PC-9 (cell line): ENCODE measurements at regions of chr10 and their contacts with region 1.

Region 1: DNA sequence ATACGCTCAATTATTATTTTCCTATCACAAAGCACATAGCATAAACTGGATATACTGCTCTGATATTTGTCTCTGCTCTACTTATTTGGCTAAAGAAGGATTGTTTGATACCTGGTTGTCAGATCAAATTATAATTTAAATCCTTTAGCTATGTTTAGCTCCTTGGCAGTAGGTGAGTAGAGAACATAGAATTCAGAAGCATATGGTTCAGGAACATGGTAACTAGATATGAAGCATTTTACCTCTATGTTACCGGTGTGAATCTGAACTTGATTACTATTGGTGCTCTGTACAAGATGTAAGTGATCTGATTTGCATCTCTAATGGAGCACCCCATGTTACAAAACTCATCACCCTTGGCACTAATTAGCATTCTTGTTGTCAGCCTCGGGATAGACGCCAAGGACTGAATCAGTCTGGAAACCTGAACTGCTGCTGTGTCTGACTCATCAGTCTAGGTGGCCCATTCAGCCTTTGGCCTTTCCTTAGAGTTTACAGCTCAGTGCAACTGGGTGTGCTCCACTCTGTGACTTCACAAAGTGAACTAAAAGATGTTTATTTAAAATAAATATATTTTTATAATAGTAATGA is 12.3 kb upstream of the MYPN start:
- DNase-seq: peak; percentile 80 to 95
- H3K4me3 ChIP-seq: peak overlapping the region; percentile 2; the same call in 1 of the 2 replicates
- H3K27ac ChIP-seq: peak overlapping the region; percentile 100
- H3K4me1 ChIP-seq: peaks cover 73% of the 10 kb centered on the region
- H3K27me3 ChIP-seq: no peaks in the 10 kb centered on the region
- CTCF ChIP-seq: no peak

Region 2: GRCh38 chr10:68052463-68052862 is 44.5 kb before region 1 on chr10:
- CTCF ChIA-PET with region 1: interaction called, 10 read pairs
- POLR2A ChIA-PET with region 1: no interaction called
- intact Hi-C with region 1: no loop called
- DNase-seq: peak in 1 of 2 experiments; percentile 76
- H3K4me3 ChIP-seq: no peak overlapping the region
- H3K27ac ChIP-seq: peak overlapping the region; percentile 38
- H3K4me1 ChIP-seq: peaks cover 25% of the 10 kb centered on the region
- H3K27me3 ChIP-seq: no peaks in the 10 kb centered on the region
- CTCF ChIP-seq: no peak

Region 3: DNA sequence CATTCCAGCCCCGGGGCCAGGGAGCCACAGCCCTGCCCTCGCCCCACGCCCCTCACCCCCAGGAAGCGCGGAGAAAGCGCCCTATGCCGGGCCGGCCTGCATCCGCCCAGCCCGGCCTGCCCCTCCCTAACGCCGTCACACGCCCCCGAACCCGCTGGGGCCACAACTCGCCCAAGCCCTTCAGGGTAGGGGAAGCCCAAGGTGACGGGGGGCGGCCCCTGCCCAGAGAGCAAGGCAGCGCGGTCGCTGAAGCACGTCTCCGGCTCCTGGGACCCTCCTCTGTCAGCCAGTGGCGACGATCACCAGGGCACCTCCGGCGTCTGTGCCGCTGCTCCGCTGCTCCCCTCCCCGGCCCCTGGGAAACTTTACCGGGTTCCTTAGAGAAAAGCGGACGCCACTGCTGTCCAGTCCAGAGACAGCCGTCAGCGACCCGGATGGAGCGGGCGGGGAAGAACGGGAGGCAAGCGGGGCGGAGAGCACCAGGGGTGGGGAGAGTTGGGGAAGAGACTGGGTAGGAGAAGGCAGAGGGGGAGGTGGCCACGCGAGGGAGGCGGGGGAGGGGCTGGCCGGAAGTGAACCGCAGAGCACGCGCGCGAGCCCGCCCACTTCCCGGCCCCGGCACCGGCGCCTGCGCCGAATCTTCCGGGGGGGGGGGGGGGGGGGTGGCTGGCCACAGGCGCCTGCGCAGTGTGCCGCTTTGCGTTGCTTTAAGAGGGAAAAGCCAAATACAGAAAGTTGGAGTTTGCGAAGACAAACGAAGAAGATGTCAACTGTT is 22.0 kb before region 1 on chr10 and contains the start of gene HERC4:
- CTCF ChIA-PET with region 1: no interaction called
- POLR2A ChIA-PET with region 1: no interaction called
- intact Hi-C with region 1: loop called (anchors 1 kb)
- DNase-seq: peak; percentile 82 to 92
- H3K4me3 ChIP-seq: peak within 1 kb of the TSS; percentile 97
- H3K27ac ChIP-seq: peak within 1 kb of the TSS; percentile 95
- H3K4me1 ChIP-seq: peaks cover 36% of the 10 kb centered on the region
- H3K27me3 ChIP-seq: no peaks in the 10 kb centered on the region
- CTCF ChIP-seq: no peak
- total RNA-seq, gene HERC4: 115 and 116 TPM in 2 replicates

Region 4: GRCh38 chr10:68135922-68136718 is 39.1 kb after region 1 on chr10:
- CTCF ChIA-PET with region 1: no interaction called
- POLR2A ChIA-PET with region 1: interaction called, 6 read pairs
- intact Hi-C with region 1: loop called (anchors 1 kb)
- DNase-seq: peak; percentile 52 to 91
- H3K4me3 ChIP-seq: peak overlapping the region; percentile 23; the same call in 1 of the 2 replicates
- H3K27ac ChIP-seq: peak overlapping the region; percentile 90
- H3K4me1 ChIP-seq: peaks cover 64% of the 10 kb centered on the region
- H3K27me3 ChIP-seq: no peaks in the 10 kb centered on the region
- CTCF ChIP-seq: no peak

Region 5: DNA sequence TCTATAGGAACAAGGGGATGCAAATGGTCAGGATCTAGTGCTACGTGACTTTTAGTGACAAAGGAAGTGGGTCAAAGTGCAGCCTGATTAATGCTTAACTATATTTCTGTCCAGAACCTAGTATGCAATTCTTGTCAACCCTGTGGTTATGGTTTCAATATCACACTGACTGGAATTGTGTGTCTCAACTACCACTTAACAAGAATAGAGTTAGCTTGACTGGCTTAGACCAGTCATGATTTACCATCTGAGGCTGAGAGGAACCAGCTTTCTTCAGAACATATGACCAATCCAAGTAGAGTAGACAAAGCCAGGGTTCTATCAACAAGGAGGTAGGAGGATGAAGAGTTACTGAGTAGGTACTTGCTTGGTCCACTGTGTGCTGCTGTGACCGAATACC is 66.7 kb after region 1 on chr10:
- CTCF ChIA-PET with region 1: no interaction called
- POLR2A ChIA-PET with region 1: no interaction called
- intact Hi-C with region 1: no loop called
- DNase-seq: no peak
- H3K4me3 ChIP-seq: no peak overlapping the region
- H3K27ac ChIP-seq: no peak overlapping the region
- H3K4me1 ChIP-seq: no peaks in the 10 kb centered on the region
- H3K27me3 ChIP-seq: no peaks in the 10 kb centered on the region
- CTCF ChIP-seq: no peak

Region 6: GRCh38 chr10:68628576-68629127 is 531.6 kb after region 1 on chr10:
- CTCF ChIA-PET with region 1: no interaction called
- POLR2A ChIA-PET with region 1: interaction called, 10 read pairs
- intact Hi-C with region 1: no loop called
- DNase-seq: peak in 1 of 2 experiments; percentile 50
- H3K4me3 ChIP-seq: no peak overlapping the region
- H3K27ac ChIP-seq: no peak overlapping the region
- H3K4me1 ChIP-seq: peaks cover 10% of the 10 kb centered on the region; the same call in 1 of the 2 replicates
- H3K27me3 ChIP-seq: no peaks in the 10 kb centered on the region
- CTCF ChIP-seq: no peak